Ascending aorta (tissue), 2 donors: ENCODE measurements at regions of chr9 and their contacts with region 1.

Region 1: GRCh38 chr9:128921881-128922763 is 1.3 kb downstream of the PHYHD1 start:
- DNase-seq: peak in 1 of 2 donors; percentile 80
- H3K4me3 ChIP-seq: peak overlapping the region; percentile 59 to 73
- H3K27ac ChIP-seq: peak overlapping the region; percentile 94 to 95
- H3K4me1 ChIP-seq: peaks cover 21 to 52% of the 10 kb centered on the region in 2 donors
- H3K27me3 ChIP-seq: no peaks in the 10 kb centered on the region
- CTCF ChIP-seq: peak in 1 of 3 experiments; percentile 4

Region 2: DNA sequence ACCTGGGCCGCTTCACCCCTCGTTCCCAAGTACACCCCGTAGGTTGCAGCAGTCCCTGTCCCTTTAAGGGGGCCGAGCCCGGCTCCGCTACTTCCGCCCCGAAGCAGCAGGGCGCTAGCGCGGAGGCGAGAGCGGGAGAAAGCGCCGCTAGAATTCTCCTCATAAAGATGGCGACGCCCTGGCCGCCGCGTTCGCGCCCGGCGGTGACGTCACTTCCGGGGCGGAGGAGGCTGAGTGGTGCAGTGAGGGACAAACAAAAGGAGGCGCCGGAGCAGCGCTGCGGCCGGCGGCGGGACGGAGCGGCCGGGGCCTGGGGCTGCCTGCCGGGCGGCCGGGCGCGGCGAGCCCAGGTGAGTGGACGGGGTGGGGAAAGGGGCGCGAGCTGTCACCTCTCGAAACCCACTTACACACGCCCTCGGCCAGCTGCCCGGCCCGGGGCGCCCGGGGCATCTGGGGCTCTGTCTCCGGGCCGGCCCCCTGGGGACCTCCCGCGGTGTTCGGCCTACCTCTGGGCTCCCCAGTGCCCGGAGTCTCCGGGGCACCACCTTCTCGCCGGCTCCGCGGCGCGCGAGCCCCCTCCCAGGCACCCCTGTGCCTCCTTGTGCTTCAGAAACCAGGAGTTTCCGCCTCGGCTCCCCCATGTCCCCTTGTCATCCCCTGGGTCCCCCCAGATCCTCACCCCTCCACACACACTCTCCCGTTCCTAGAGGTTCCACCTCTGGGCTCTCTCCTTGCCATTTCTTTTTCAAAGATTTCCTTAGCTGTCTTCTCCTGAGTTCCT is 40.0 kb before region 1 on chr9 and contains the starts of genes KYAT1 and LRRC8A:
- intact Hi-C with region 1: loop called (anchors 1 kb)
- DNase-seq: peak; percentile 93 to 99
- H3K4me3 ChIP-seq: peak within 1 kb of the TSS; percentile 89 to 90
- H3K27ac ChIP-seq: peak within 1 kb of the TSS; percentile 96 to 98
- H3K4me1 ChIP-seq: peaks cover 25 to 46% of the 10 kb centered on the region in 2 donors
- H3K27me3 ChIP-seq: no peaks in the 10 kb centered on the region
- CTCF ChIP-seq: peak in 1 of 3 experiments; percentile 4
- total RNA-seq, gene KYAT1: 4.9 TPM
- total RNA-seq, gene LRRC8A: 227 TPM

Region 3: GRCh38 chr9:129242941-129243561 is 320.9 kb after region 1 on chr9:
- intact Hi-C with region 1: no loop called
- DNase-seq: no peak
- H3K4me3 ChIP-seq: no peak overlapping the region
- H3K27ac ChIP-seq: peak overlapping the region in 1 of 2 donors; percentile 27
- H3K4me1 ChIP-seq: no peaks in the 10 kb centered on the region
- H3K27me3 ChIP-seq: no peaks in the 10 kb centered on the region
- CTCF ChIP-seq: no peak